Activated naive CD4-positive, alpha-beta T cell treated with anti-CD3 and anti-CD28 coated beads for 36 hours (primary cell): ENCODE measurements at regions of chr4 and their contacts with region 1.

Region 1: DNA sequence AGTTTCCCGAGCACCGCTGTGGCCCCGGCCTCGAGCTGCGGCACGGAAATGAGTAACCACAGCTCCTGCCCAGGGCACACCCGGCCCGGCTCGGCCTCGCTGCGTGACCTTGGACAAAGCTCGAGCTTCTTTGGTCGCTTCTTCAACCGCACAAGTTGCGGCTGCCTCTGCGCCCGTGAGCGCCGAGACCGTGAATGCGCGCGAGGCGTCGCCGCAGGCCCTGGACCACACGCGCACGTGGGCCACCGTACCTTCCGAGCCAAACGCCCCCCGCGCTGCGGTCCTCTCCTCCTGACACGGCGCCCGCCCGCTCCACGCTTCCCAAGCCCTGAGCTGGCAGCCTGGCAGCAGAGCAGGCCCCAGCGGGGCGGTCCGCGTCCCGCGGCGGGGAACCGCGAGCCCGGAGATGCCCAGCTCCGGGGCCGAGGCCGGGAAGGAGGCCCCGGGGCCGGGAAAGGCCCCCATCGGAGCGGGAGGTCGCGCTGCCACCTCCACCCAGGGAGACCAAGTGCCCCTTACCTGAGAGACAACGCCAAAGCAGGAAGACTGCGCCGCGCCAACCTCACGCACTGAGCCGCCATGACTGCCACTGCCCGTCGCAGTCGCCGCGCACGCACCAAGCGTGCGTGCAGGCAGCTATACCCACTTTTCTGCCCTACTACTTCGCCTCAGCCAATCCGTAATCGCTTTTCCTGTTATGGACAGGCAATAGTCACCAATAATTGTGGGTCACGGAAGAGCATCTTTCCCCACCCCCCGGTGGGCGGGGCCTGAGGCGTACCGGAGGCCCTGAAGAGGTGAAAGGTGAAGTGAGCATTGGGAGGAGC is at the start of gene GRPEL1:
- DNase-seq: peak; percentile 100
- H3K4me3 Mint-ChIP-seq: peak within 1 kb of the TSS; percentile 96
- H3K27ac Mint-ChIP-seq: peak within 1 kb of the TSS; percentile 89
- H3K4me1 Mint-ChIP-seq: peaks cover 39% of the 10 kb centered on the region
- H3K27me3 Mint-ChIP-seq: no peaks in the 10 kb centered on the region
- total RNA-seq, gene GRPEL1: 53.7 to 53.9 TPM

Region 2: GRCh38 chr4:6574747-6575502 is 492.7 kb before region 1 on chr4 and contains the start of gene MAN2B2:
- CTCF ChIA-PET with region 1: interaction called, 4 read pairs
- intact Hi-C with region 1: loop called (anchors 1 kb)
- DNase-seq: peak; percentile 83
- H3K4me3 Mint-ChIP-seq: peak within 1 kb of the TSS; percentile 84
- H3K27ac Mint-ChIP-seq: peak within 1 kb of the TSS; percentile 60
- H3K4me1 Mint-ChIP-seq: peaks cover 4% of the 10 kb centered on the region
- H3K27me3 Mint-ChIP-seq: no peaks in the 10 kb centered on the region
- total RNA-seq, gene MAN2B2: 12.7 to 12.8 TPM

Region 3: DNA sequence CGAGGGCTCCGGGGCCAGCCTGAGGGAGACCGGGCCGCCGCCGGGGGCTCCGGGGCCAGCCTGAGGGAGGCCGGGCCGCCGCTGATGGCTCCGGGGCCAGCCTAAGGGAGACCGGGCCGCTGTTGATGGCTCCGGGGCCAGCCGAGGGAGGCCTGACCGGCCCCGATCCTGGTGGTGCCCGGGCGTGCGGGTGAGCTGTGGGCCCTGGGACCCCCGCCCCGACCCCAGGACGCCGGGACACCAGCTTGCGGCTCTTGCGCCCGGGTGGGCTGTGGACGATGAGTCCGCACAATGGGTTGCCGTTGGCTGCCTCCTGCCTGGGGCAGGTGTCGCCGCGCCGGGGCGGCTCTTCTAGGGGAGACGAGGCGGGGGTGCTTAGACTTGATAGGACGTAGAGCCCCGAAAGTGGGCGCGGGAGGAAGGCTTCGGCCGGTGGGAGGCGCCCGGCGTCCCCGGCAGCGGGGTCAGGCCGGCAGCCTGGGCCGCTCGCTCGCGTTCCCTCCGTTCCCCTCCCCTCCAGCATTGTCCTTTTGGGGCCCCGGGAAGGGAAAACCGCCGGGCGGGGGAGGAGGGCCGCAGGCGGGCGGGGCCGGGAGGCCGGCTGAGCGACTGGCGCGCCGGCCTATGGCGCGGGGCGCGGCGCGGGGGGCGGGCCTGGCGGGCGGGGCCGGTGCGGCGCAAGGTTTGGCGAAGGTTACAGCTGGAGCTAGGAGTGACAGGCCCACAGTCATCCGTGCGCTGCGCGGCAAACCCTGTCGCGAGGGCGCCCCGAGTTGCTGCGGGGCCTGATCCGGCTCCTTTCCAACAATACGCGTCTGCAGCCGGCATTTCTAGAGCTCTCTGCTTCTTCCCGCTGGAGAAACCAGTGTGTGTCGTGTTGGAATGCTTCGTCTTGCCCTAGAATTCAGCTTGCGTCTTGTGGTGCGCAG is 284.3 kb before region 1 on chr4:
- CTCF ChIA-PET with region 1: no interaction called
- intact Hi-C with region 1: loop called (anchors 1 kb)
- DNase-seq: peak; percentile 91
- H3K4me3 Mint-ChIP-seq: peak overlapping the region; percentile 81
- H3K27ac Mint-ChIP-seq: peak overlapping the region; percentile 78
- H3K4me1 Mint-ChIP-seq: peaks cover 51% of the 10 kb centered on the region
- H3K27me3 Mint-ChIP-seq: no peaks in the 10 kb centered on the region

Region 4: GRCh38 chr4:6909073-6909965 is 158.3 kb before region 1 on chr4 and contains the start of gene TBC1D14:
- CTCF ChIA-PET with region 1: interaction called, 30 read pairs
- intact Hi-C with region 1: loop called (anchors 1 kb)
- DNase-seq: peak; percentile 88
- H3K4me3 Mint-ChIP-seq: peak within 1 kb of the TSS; percentile 92
- H3K27ac Mint-ChIP-seq: peak within 1 kb of the TSS; percentile 86
- H3K4me1 Mint-ChIP-seq: peaks cover 45% of the 10 kb centered on the region
- H3K27me3 Mint-ChIP-seq: peaks cover 3% of the 10 kb centered on the region
- total RNA-seq, gene TBC1D14: 23.6 to 24.6 TPM

Region 5: DNA sequence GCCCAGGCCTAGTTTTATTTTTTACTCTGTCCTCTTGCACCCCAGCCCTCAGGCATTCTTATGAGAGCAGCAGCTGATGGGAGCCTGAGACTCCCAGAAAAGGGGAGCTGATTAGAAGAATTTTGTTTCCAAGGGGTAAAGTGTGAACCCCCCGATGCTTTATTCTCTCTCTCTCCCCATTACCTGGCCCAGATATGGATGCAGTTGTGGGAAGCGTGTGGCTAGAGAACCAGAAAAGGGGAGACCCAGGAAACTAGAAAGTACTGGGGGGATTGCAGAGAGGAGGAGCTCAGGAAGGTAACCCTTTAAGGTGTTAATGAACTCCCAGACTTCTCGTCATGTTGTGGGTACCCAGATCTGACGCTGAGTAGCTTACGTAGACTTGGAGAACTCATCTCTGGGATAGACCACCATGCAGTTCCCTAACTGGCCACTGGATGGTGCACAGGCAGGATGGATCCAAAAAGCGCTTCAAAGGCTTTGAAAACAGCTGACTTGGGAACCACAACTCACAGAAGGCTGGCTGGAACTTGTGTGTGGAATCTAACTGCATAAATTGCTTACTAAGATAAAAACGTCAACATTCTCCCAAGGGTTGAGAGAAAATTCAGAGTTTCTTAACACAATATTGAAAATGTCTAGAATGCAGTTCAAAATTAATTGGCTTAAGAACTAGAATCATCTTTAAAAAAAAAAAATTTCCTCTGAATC is 93.4 kb before region 1 on chr4:
- CTCF ChIA-PET with region 1: interaction called, 26 read pairs
- intact Hi-C with region 1: loop called (anchors 1 kb)
- DNase-seq: peak; percentile 91
- H3K4me3 Mint-ChIP-seq: no peak overlapping the region
- H3K27ac Mint-ChIP-seq: no peak overlapping the region
- H3K4me1 Mint-ChIP-seq: peaks cover 13% of the 10 kb centered on the region
- H3K27me3 Mint-ChIP-seq: no peaks in the 10 kb centered on the region

Region 6: DNA sequence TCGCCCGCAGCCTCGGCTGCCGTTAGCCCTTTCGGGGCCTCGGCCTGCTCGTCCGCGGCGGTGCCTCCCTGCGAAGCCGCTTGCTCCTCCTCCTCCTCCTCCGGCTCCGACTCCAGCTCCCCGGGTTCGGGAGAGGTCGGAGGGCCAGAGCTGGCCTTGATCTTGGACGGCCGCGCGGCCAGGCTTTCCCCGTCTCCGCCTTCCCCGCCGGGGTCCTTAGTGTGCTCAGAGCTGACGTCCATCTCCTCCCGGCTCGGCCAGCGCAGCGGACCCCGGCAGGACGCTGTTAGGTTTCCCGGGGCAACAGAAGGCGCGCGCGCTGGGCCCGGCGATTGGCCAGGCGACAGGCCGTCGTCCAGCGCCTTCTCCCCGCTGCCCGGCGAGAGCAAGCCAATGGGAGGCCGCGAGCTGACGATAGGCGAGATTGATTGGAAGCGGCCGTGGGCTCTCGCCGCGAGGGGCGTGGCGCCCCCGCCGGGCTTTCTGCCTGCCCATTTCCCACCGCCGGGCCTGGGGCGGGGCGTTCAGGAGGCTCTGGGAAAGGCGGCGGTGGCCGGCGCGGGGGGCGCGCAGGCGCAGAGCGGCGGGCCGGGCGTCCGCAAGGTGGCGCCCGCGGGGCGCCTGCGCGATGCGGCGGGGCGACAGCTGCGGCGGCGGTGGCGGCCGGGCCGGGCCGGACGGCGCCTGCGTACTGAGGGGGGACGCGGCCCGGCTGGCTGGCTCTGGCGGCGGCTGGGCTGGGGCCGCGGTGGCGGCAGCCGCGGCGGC is 24.8 kb before region 1 on chr4 and contains the start of gene TADA2B:
- CTCF ChIA-PET with region 1: interaction called, 155 read pairs
- intact Hi-C with region 1: loop called (anchors 1 kb)
- DNase-seq: peak; percentile 91
- H3K4me3 Mint-ChIP-seq: peak within 1 kb of the TSS; percentile 89
- H3K27ac Mint-ChIP-seq: peak within 1 kb of the TSS; percentile 46
- H3K4me1 Mint-ChIP-seq: peaks cover 43% of the 10 kb centered on the region
- H3K27me3 Mint-ChIP-seq: no peaks in the 10 kb centered on the region
- total RNA-seq, gene TADA2B: 8.2 to 9.9 TPM

Region 7: GRCh38 chr4:7101692-7102515 is 34.2 kb after region 1 on chr4:
- CTCF ChIA-PET with region 1: interaction called, 22 read pairs
- intact Hi-C with region 1: loop called (anchors 1 kb)
- DNase-seq: peak; percentile 79
- H3K4me3 Mint-ChIP-seq: peak overlapping the region; percentile 90
- H3K27ac Mint-ChIP-seq: no peak overlapping the region
- H3K4me1 Mint-ChIP-seq: peaks cover 8% of the 10 kb centered on the region
- H3K27me3 Mint-ChIP-seq: no peaks in the 10 kb centered on the region

Region 8: DNA sequence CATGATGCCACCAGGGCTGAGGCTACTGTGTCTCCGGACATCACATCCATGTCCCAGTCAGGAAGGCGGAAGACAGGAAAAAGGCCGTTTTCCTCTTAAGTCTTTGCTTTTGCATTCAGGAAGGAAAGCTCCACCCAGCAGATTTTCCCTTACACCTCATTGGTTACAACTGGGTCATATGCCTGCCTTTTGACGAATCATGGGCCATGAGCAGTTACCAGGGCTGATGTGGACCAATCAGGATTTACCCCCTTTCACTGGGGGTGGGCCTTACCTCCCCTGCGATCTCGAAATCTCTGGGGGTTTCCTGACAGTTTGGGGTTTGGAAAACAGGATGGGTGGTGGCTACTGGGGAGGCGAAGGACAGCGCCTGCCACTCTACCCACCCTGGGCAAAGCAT is 52.7 kb after region 1 on chr4:
- CTCF ChIA-PET with region 1: no interaction called
- intact Hi-C with region 1: no loop called
- DNase-seq: no peak
- H3K4me3 Mint-ChIP-seq: no peak overlapping the region
- H3K27ac Mint-ChIP-seq: no peak overlapping the region
- H3K4me1 Mint-ChIP-seq: no peaks in the 10 kb centered on the region
- H3K27me3 Mint-ChIP-seq: peaks cover 10% of the 10 kb centered on the region